Adrenal gland (tissue), 19 donors: ENCODE measurements at regions of chr9 and their contacts with region 1.

Region 1: GRCh38 chr9:115022760-115023434 is 92.5 kb upstream of the TNFSF8 start:
- DNase-seq: no peak
- H3K4me3 ChIP-seq: no peak overlapping the region
- H3K27ac ChIP-seq: no peak overlapping the region
- H3K4me1 ChIP-seq: no peaks in the 10 kb centered on the region
- H3K27me3 ChIP-seq: no peaks in the 10 kb centered on the region
- CTCF ChIP-seq: no peak
- POLR2A ChIP-seq: no peak

Region 2: DNA sequence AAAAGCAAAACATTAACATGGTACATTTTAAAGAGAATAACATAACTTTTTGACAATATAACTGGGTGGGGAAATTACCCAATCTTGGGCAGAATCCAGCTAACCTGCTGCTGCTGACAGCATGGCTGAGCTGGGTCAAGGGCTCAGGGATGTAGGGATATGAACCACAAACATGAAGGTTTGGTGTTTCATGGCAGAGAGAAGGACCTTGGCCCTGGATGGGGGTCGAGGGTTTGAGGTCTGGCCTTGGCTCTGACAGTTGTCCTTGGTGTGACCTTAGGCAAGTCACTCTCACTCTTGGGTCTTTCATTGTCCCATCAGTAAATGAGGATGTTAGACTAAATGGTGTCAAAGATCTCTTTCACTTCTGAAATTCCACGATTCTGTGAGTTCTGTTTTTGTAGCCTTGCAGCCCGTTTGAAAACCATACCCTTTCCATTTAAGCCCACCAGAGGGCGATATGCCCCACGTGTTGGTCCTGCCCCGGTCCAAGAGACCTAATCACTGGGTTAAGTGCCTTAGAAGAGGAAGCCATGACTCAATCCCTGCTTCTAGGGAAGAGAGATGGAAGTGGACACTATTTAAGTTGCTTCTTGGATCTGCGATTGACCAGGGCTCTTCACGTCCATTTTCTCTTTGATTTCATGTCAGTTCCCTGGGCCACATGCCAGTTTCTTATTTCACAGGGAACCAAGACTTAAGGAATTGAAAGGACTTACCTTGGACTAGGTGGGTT is 284.1 kb before region 1 on chr9:
- intact Hi-C with region 1: loop called in 1 of 2 experiments (anchors 10 kb)
- DNase-seq: peak; percentile 66 to 91 (median 75)
- H3K4me3 ChIP-seq: no peak overlapping the region
- H3K27ac ChIP-seq: no peak overlapping the region
- H3K4me1 ChIP-seq: no peaks in the 10 kb centered on the region
- H3K27me3 ChIP-seq: no peaks in the 10 kb centered on the region
- CTCF ChIP-seq: peak; percentile 82 to 92 (median 88)
- POLR2A ChIP-seq: no peak

Region 3: GRCh38 chr9:115117999-115118878 is 95.3 kb after region 1 on chr9 and contains the start of gene TNC:
- intact Hi-C with region 1: no loop called
- DNase-seq: peak; percentile 20 to 66 (median 46)
- H3K4me3 ChIP-seq: peak within 1 kb of the TSS in 1 of 4 donors; percentile 43
- H3K27ac ChIP-seq: peak within 1 kb of the TSS in 1 of 5 donors; percentile 49
- H3K4me1 ChIP-seq: peaks cover 0 to 15% of the 10 kb centered on the region in 2 donors
- H3K27me3 ChIP-seq: peaks cover 22% of the 10 kb centered on the region
- CTCF ChIP-seq: no peak
- POLR2A ChIP-seq: no peak
- total RNA-seq, gene TNC: 6.9 to 53.8 (median 12.1) TPM